Activated CD4-positive, alpha-beta memory T cell treated with anti-CD3 and anti-CD28 coated beads for 36 hours (primary cell): ENCODE measurements at regions of chr12 and their contacts with region 1.

Region 1: GRCh38 chr12:46071769-46072624 is 81.6 kb upstream of the SCAF11 start:
- DNase-seq: peak; percentile 74
- H3K4me3 Mint-ChIP-seq: no peak overlapping the region
- H3K27ac Mint-ChIP-seq: no peak overlapping the region
- H3K4me1 Mint-ChIP-seq: peaks cover 3% of the 10 kb centered on the region
- H3K27me3 Mint-ChIP-seq: no peaks in the 10 kb centered on the region

Region 2: GRCh38 chr12:45893240-45893639 is 178.8 kb before region 1 on chr12:
- CTCF ChIA-PET with region 1: no interaction called
- POLR2A ChIA-PET with region 1: no interaction called
- intact Hi-C with region 1: no loop called
- DNase-seq: no peak
- H3K4me3 Mint-ChIP-seq: no peak overlapping the region
- H3K27ac Mint-ChIP-seq: no peak overlapping the region
- H3K4me1 Mint-ChIP-seq: peaks cover 14% of the 10 kb centered on the region
- H3K27me3 Mint-ChIP-seq: no peaks in the 10 kb centered on the region

Region 3: GRCh38 chr12:46043972-46044520 is 28.0 kb before region 1 on chr12:
- CTCF ChIA-PET with region 1: no interaction called
- POLR2A ChIA-PET with region 1: no interaction called
- intact Hi-C with region 1: no loop called
- DNase-seq: no peak
- H3K4me3 Mint-ChIP-seq: no peak overlapping the region
- H3K27ac Mint-ChIP-seq: no peak overlapping the region
- H3K4me1 Mint-ChIP-seq: no peaks in the 10 kb centered on the region
- H3K27me3 Mint-ChIP-seq: peaks cover 10% of the 10 kb centered on the region

Region 4: GRCh38 chr12:46303039-46303666 is 231.2 kb after region 1 on chr12:
- CTCF ChIA-PET with region 1: interaction called, 3 read pairs
- POLR2A ChIA-PET with region 1: no interaction called
- intact Hi-C with region 1: loop called (anchors 5 kb)
- DNase-seq: peak; percentile 51
- H3K4me3 Mint-ChIP-seq: no peak overlapping the region
- H3K27ac Mint-ChIP-seq: no peak overlapping the region
- H3K4me1 Mint-ChIP-seq: peaks cover 3% of the 10 kb centered on the region
- H3K27me3 Mint-ChIP-seq: no peaks in the 10 kb centered on the region

Region 5: DNA sequence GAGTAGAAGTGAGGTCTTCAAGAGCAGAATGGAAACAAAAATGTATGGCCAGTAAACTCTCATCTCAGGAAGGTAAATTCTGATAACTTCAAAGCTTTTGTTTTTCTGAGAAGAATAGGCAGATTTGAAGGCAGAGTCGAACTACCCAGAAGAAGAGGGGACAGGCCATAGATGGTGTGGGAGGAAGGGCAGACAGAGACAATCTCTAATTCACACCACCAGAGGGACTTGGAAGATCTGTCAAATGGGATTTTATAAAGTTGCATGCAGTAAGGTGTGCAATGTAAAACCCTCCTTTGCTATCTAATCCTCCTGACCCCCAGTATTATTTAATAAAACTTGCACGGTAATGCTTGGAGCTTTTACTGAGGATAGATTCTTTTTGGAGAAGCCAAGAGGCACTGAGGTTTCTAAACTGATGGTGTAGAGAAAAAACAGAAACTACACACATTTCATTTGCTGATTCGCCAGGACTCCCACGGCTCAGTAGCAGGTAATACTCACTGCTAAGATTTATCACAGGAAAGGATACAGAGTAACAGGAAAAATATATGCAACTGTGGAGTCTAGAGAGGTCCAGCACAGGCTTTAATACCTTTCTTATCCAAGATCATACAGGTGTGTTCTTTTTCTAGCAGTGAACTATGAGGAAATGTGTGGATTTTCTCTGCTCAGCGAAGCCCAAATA is 282.3 kb after region 1 on chr12:
- CTCF ChIA-PET with region 1: no interaction called
- POLR2A ChIA-PET with region 1: no interaction called
- intact Hi-C with region 1: no loop called
- DNase-seq: no peak
- H3K4me3 Mint-ChIP-seq: no peak overlapping the region
- H3K27ac Mint-ChIP-seq: no peak overlapping the region
- H3K4me1 Mint-ChIP-seq: peaks cover 16% of the 10 kb centered on the region
- H3K27me3 Mint-ChIP-seq: no peaks in the 10 kb centered on the region

Region 6: GRCh38 chr12:47021298-47021697 is 949.3 kb after region 1 on chr12:
- CTCF ChIA-PET with region 1: interaction called, 4 read pairs
- POLR2A ChIA-PET with region 1: no interaction called
- intact Hi-C with region 1: loop called (anchors 10 kb)
- DNase-seq: no peak
- H3K4me3 Mint-ChIP-seq: no peak overlapping the region
- H3K27ac Mint-ChIP-seq: no peak overlapping the region
- H3K4me1 Mint-ChIP-seq: peaks cover 7% of the 10 kb centered on the region
- H3K27me3 Mint-ChIP-seq: peaks cover 23% of the 10 kb centered on the region